HEK293 (cell line): ENCODE measurements at regions of chr1 and their contacts with region 1.

Region 1: GRCh38 chr1:63327417-63328139 is 5.2 kb downstream of the FOXD3 start:
- H3K4me3 ChIP-seq: no peak overlapping the region
- H3K27ac ChIP-seq: no peak overlapping the region
- H3K4me1 ChIP-seq: peaks cover 5% of the 10 kb centered on the region; the same call in 1 of the 2 replicates
- CTCF ChIP-seq: peak; percentile 86

Region 2: GRCh38 chr1:63063367-63063766 is 264.2 kb before region 1 on chr1:
- CTCF ChIA-PET with region 1: no interaction called
- POLR2A ChIA-PET with region 1: no interaction called
- H3K4me3 ChIP-seq: no peak overlapping the region
- H3K27ac ChIP-seq: no peak overlapping the region
- H3K4me1 ChIP-seq: no peaks in the 10 kb centered on the region
- CTCF ChIP-seq: no peak

Region 3: GRCh38 chr1:63316984-63317816 is 10.4 kb before region 1 on chr1:
- CTCF ChIA-PET with region 1: interaction called, 25 read pairs
- POLR2A ChIA-PET with region 1: interaction called, 3 read pairs
- H3K4me3 ChIP-seq: peak overlapping the region; percentile 54
- H3K27ac ChIP-seq: peak overlapping the region; percentile 68
- H3K4me1 ChIP-seq: peaks cover 7% of the 10 kb centered on the region; the same call in 1 of the 2 replicates
- CTCF ChIP-seq: peak; percentile 90

Region 4: DNA sequence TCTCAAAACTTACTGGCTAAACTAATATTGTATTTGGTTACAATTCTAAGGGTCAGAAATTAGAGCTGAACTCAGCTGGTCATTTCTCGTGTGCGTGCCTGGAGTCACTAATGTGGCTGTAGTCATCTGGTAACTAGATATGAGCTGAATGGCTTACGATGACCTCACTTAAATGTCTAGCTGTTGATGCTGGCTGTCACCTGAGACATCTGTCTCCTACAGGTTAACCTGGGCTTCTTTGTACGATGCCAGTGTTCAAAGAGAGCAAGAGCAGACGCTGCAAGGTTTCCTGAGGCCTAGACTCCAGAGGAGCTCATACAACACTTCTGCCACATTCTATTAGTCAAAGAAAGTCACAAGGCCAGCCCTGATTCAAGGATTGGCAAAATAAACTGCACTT is 22.7 kb after region 1 on chr1:
- CTCF ChIA-PET with region 1: interaction called, 34 read pairs
- POLR2A ChIA-PET with region 1: no interaction called
- H3K4me3 ChIP-seq: no peak overlapping the region
- H3K27ac ChIP-seq: no peak overlapping the region
- H3K4me1 ChIP-seq: 0 out of 2 replicates have a peak, but pooled peaks cover 2% of the 10 kb centered on the region
- CTCF ChIP-seq: no peak